ENCODE measurements at regions of chr14 and their contacts with region 1.

Region 1: GRCh38 chr14:28756884-28757570 is 9.6 kb upstream of the FOXG1 start:
- DNase-seq: no peak
- H3K4me3 ChIP-seq: no peak overlapping the region
- H3K27ac ChIP-seq: no peak overlapping the region
- H3K27me3 ChIP-seq: peaks cover 65% of the 10 kb centered on the region
- CTCF ChIP-seq: peak; percentile 87

Region 2: DNA sequence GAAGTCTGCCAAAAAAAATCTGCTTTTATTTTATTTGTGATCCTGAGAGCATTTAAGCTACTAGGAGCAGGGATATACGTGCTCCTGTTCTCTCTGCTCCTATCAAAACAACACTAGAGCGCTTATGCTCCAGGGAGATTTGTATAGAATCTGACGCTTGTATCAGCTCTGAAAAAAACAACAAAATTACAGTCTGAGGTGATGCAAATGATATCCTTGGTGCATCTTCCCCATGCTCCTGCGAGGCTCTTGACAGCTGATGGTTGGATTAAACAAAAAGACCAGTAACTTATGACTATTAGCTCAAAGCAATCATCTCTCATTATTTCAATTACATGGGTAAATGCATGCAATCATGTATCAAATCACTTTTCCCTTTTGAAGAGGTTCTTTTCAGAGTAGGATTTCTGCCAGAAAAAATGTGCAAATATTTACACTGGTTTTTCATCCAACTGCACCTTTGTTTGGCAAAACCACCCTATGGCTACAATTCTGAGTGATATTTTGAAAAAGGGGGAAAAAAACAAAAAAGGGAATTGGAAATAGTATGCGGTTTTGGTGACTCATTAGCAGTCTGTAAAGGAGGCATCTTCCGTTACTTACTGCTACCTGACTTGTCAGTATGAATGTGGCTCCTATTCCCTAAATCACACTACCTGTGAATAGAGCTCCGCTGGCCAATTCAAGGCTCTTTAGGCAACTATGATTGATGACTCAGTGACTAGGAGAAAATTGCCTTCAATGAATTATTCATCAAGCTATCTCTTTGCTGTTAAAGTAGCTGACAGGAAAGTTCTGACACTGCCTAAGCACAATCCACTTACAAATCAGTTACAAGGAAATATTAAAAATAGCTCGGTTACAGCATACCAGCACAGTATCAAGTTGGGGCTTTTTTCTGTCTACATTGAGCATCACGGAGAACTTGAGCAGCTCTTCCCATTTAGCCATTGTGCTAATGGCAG is 459.5 kb after region 1 on chr14:
- CTCF ChIA-PET with region 1: interaction called, 40 read pairs
- POLR2A ChIA-PET with region 1: no interaction called
- DNase-seq: no peak
- H3K4me3 ChIP-seq: no peak overlapping the region
- H3K27ac ChIP-seq: no peak overlapping the region
- H3K27me3 ChIP-seq: no peaks in the 10 kb centered on the region
- CTCF ChIP-seq: no peak

Measured in AG04450 (cell line).